Left lung (tissue), 14 donors: ENCODE measurements at regions of chr4 and their contacts with region 1.

Region 1: DNA sequence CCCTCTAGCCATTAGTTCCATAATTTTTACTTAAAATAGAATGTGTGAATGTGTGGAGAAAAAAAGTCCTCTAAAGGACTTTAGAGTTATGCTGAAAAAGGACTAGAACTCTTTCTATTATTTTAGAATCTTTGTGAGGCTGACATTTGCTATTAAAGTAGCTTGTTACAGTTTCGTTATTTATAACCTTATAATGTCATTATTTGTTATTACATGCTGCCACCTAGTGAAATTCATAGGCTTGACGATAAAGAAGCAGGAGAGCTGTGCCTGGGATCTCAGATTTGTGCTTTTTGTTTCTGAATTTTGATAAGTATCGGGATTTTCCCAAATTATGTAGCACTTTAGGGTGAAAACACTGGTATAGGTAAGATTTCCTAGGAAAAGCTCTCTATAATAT is 38.5 kb upstream of the TAPT1 start:
- DNase-seq: peak in 2 of 4 donors; percentile 27 to 63
- ATAC-seq: peak; percentile 84
- H3K4me3 ChIP-seq: no peak overlapping the region
- H3K27ac ChIP-seq: no peak overlapping the region
- H3K4me1 ChIP-seq: no peaks in the 10 kb centered on the region
- H3K27me3 ChIP-seq: no peaks in the 10 kb centered on the region
- CTCF ChIP-seq: peak; percentile 50 to 71

Region 2: DNA sequence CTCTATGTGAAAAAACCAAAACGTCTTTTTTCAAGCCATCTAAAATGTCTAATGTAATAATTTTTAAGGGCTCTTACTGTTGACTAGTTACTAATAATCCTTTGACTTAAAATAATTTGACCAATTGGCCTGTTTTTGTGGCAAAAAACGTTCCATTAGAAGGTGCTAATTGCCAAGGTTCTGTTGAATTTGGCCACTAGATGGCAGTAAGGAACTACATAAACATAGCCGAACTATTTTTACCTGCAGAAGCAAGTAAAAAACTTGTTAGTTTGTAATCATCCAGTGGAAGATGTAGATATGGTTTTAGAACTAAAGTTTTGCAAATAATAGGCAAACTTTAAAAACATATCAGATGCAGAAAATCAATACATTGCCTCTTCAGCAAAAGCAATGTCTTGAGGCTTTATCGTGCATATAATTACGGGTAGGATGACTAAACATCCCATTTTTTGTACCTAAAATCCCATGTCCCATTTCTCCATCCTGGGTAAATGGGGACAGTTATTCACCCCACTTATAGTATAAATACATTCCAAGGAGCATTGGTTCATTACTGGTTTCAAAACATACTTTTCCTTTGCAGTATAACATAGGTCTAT is 238.5 kb before region 1 on chr4:
- intact Hi-C with region 1: loop called in 1 of 2 experiments (anchors 5 kb)
- DNase-seq: peak in 2 of 4 donors; percentile 42 to 65
- ATAC-seq: peak; percentile 75
- H3K4me3 ChIP-seq: no peak overlapping the region
- H3K27ac ChIP-seq: no peak overlapping the region
- H3K4me1 ChIP-seq: peaks cover 0 to 6% of the 10 kb centered on the region in 2 donors
- H3K27me3 ChIP-seq: no peaks in the 10 kb centered on the region
- CTCF ChIP-seq: peak; percentile 74 to 86

Region 3: GRCh38 chr4:16116493-16116990 is 148.3 kb before region 1 on chr4:
- intact Hi-C with region 1: no loop called
- DNase-seq: no peak
- ATAC-seq: no peak
- H3K4me3 ChIP-seq: no peak overlapping the region
- H3K27ac ChIP-seq: no peak overlapping the region
- H3K4me1 ChIP-seq: no peaks in the 10 kb centered on the region
- H3K27me3 ChIP-seq: no peaks in the 10 kb centered on the region
- CTCF ChIP-seq: no peak

Region 4: GRCh38 chr4:16205298-16206164 is 59.3 kb before region 1 on chr4:
- intact Hi-C with region 1: loop called in 1 of 2 experiments (anchors 10 kb)
- DNase-seq: no peak
- ATAC-seq: peak; percentile 78
- H3K4me3 ChIP-seq: no peak overlapping the region
- H3K27ac ChIP-seq: no peak overlapping the region
- H3K4me1 ChIP-seq: peaks cover 0 to 45% of the 10 kb centered on the region in 2 donors
- H3K27me3 ChIP-seq: no peaks in the 10 kb centered on the region
- CTCF ChIP-seq: peak in 1 of 2 donors; percentile 43

Region 5: DNA sequence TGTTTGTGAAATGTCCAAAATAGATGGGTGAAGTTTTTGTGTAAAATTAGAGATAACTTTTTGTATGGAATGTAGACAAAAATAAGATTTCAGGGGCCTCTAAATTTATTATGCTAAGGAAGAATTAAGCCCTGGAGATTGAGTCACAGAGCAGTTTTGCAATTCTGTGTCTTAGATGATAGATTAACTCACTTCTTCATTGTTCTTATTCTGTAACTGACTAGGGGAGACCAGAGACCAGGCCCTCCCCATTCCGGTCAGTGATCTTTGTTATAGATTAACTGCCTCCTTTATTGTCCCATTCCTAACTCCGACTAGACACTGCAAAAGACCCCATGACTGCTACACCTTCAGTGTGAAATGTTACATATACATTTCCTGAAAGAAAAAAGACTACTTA is 199.9 kb after region 1 on chr4:
- intact Hi-C with region 1: no loop called
- DNase-seq: no peak
- ATAC-seq: no peak
- H3K4me3 ChIP-seq: no peak overlapping the region
- H3K27ac ChIP-seq: no peak overlapping the region
- H3K4me1 ChIP-seq: no peaks in the 10 kb centered on the region
- H3K27me3 ChIP-seq: no peaks in the 10 kb centered on the region
- CTCF ChIP-seq: no peak